CD8-positive, alpha-beta T cell (primary cell): ENCODE measurements at regions of chr17 and their contacts with region 1.

Region 1: GRCh38 chr17:41738077-41738735 is 3.8 kb upstream of the HAP1 start:
- DNase-seq: peak; percentile 57 to 87 (median 77)
- ATAC-seq: peak; percentile 97
- H3K4me3 ChIP-seq: no peak overlapping the region
- H3K4me3 Mint-ChIP-seq: no peak overlapping the region
- H3K27ac ChIP-seq: no peak overlapping the region
- H3K27ac Mint-ChIP-seq: no peak overlapping the region
- H3K4me1 ChIP-seq: peaks cover 10% of the 10 kb centered on the region
- H3K4me1 Mint-ChIP-seq: peaks cover 5% of the 10 kb centered on the region
- H3K27me3 ChIP-seq: peaks cover 9 to 31% of the 10 kb centered on the region in 2 experiments
- H3K27me3 Mint-ChIP-seq: peaks cover 27% of the 10 kb centered on the region
- CTCF ChIP-seq: peak; percentile 98

Region 2: DNA sequence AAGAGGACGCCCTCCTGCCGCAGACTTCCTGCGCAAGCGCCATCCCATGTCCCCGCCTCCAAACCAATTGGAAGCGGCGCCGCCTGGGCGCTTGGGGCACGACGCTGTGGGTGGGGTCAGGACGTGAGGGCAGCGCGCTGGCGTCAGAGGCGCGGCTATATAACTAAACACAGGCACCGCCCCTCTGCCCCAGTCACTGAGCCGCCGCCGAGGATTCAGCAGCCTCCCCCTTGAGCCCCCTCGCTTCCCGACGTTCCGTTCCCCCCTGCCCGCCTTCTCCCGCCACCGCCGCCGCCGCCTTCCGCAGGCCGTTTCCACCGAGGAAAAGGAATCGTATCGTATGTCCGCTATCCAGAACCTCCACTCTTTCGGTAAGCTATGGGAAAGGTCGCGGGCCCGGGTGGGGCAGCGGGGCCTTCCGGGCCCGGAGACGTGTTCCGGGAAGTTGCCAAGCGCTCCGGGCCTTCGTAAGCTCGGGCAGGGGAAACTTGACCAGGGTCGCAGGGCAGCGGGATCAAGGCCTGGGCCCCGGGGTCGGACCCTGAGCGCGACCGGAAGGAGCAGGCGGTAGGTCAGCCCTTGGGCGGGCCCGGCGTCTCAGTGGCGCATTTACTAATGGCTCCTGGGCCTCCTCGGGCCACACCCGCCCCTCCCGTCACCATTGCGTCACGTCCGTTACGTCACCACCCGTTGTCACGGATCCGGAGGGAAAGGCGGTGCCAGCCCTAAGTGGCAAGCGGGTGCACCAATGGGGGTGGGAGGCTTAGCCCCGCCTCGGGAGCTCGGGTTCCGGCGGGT is 49.3 kb before region 1 on chr17 and contains the start of gene EIF1:
- CTCF ChIA-PET with region 1: no interaction called
- POLR2A ChIA-PET with region 1: no interaction called
- intact Hi-C with region 1: no loop called
- DNase-seq: peak; percentile 99 to 100 (median 100)
- ATAC-seq: peak; percentile 76
- H3K4me3 ChIP-seq: peak within 1 kb of the TSS; percentile 65 to 89
- H3K4me3 Mint-ChIP-seq: peak within 1 kb of the TSS; percentile 95
- H3K27ac ChIP-seq: peak within 1 kb of the TSS; percentile 93 to 100
- H3K27ac Mint-ChIP-seq: peak within 1 kb of the TSS; percentile 99
- H3K4me1 ChIP-seq: peaks cover 31% of the 10 kb centered on the region
- H3K4me1 Mint-ChIP-seq: peaks cover 36% of the 10 kb centered on the region
- H3K27me3 ChIP-seq: no peaks in the 10 kb centered on the region
- H3K27me3 Mint-ChIP-seq: no peaks in the 10 kb centered on the region
- CTCF ChIP-seq: no peak
- total RNA-seq, gene EIF1: 3,749 to 3,996 TPM

Region 3: DNA sequence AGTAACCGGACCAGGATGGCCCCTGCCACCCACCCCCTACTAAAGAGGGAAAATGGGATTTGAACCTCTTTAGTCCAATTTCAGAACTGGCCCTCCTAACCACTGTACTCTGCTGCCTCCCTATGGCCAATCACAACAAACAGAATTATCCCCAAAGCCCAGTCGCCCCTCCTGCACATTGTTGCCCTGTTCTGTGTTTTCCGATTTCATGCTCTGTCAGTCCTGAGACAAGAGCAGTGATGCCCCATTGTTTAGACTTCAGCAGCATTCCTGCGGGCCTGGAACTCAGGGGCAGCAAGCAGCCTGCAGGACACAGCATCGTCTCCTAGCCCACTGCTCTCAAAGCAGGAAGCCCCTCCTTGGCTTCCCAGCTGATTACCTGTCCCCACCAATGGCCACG is 147.5 kb after region 1 on chr17:
- CTCF ChIA-PET with region 1: interaction called, 3 read pairs
- POLR2A ChIA-PET with region 1: no interaction called
- intact Hi-C with region 1: loop called in 1 of 2 experiments (anchors 2 kb)
- DNase-seq: peak in 1 of 9 experiments; percentile 26
- ATAC-seq: no peak
- H3K4me3 ChIP-seq: no peak overlapping the region
- H3K4me3 Mint-ChIP-seq: no peak overlapping the region
- H3K27ac ChIP-seq: no peak overlapping the region
- H3K27ac Mint-ChIP-seq: no peak overlapping the region
- H3K4me1 ChIP-seq: no peaks in the 10 kb centered on the region
- H3K4me1 Mint-ChIP-seq: peaks cover 1% of the 10 kb centered on the region
- H3K27me3 ChIP-seq: no peaks in the 10 kb centered on the region
- H3K27me3 Mint-ChIP-seq: no peaks in the 10 kb centered on the region
- CTCF ChIP-seq: no peak